ENCODE measurements at regions of chr7 and their contacts with region 1.

Region 1: GRCh38 chr7:27102581-27103442 is at the start of gene HOXA2:
- DNase-seq: peak; percentile 86
- H3K4me3 ChIP-seq: peak within 1 kb of the TSS; percentile 35 to 92 (median 45)
- H3K27ac ChIP-seq: peak within 1 kb of the TSS; percentile 93
- H3K4me1 ChIP-seq: peaks cover 90% of the 10 kb centered on the region
- H3K27me3 ChIP-seq: no peaks in the 10 kb centered on the region
- CTCF ChIP-seq: no peak
- POLR2A ChIP-seq: no peak
- total RNA-seq, gene HOXA2: 2.2 and 2.3 TPM in 2 replicates

Region 2: DNA sequence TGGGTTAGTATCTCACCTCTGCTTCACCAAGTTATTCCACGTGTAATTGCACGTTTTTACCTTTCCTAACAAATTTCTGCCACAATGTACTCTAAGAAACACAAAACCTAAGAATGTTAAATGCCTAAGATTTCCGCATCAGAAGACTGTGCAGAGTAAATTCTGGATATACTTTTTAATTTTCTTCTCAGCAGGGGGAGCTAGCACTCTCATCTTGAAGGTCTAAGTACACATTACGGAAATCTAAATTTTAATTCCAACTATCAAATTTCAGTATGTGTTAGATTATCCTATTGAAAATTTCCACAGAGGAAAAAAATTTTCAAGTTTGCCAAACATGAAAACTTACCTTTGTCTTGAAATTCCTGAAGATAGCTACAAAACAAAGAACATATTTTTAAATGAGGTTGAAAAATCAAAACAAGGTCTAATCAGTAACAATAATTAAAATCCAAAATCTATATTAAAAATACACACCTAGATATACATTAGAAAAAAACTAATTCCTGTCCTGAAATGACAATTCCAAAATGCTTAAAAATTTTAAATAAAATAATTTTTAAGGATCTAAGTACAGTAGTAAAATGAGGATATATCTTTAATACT is 248.9 kb before region 1 on chr7:
- CTCF ChIA-PET with region 1: interaction called, 124 read pairs
- POLR2A ChIA-PET with region 1: interaction called, 3 read pairs
- dilution Hi-C with region 1: no loop called
- intact Hi-C with region 1: no loop called
- DNase-seq: peak; percentile 69
- H3K4me3 ChIP-seq: no peak overlapping the region
- H3K27ac ChIP-seq: no peak overlapping the region
- H3K4me1 ChIP-seq: peaks cover 34% of the 10 kb centered on the region
- H3K27me3 ChIP-seq: no peaks in the 10 kb centered on the region
- CTCF ChIP-seq: peak; percentile 24 to 26
- POLR2A ChIP-seq: no peak

Region 3: GRCh38 chr7:27375958-27376357 is 273.1 kb after region 1 on chr7:
- CTCF ChIA-PET with region 1: no interaction called
- POLR2A ChIA-PET with region 1: no interaction called
- dilution Hi-C with region 1: no loop called
- intact Hi-C with region 1: no loop called
- DNase-seq: peak; percentile 25
- H3K4me3 ChIP-seq: no peak overlapping the region
- H3K27ac ChIP-seq: no peak overlapping the region
- H3K4me1 ChIP-seq: peaks cover 6% of the 10 kb centered on the region
- H3K27me3 ChIP-seq: peaks cover 2 to 4% of the 10 kb centered on the region in 2 experiments
- CTCF ChIP-seq: no peak
- POLR2A ChIP-seq: no peak

Region 4: GRCh38 chr7:27750316-27750715 is 647.5 kb after region 1 on chr7:
- CTCF ChIA-PET with region 1: no interaction called
- POLR2A ChIA-PET with region 1: no interaction called
- dilution Hi-C with region 1: no loop called
- intact Hi-C with region 1: no loop called
- DNase-seq: peak; percentile 11
- H3K4me3 ChIP-seq: no peak overlapping the region
- H3K27ac ChIP-seq: no peak overlapping the region
- H3K4me1 ChIP-seq: peaks cover 6% of the 10 kb centered on the region
- H3K27me3 ChIP-seq: no peaks in the 10 kb centered on the region
- CTCF ChIP-seq: no peak
- POLR2A ChIP-seq: no peak

Measured in endothelial cell of umbilical vein (primary cell).